Uterus (tissue), 4 donors: ENCODE measurements at regions of chr16 and their contacts with region 1.

Region 1: DNA sequence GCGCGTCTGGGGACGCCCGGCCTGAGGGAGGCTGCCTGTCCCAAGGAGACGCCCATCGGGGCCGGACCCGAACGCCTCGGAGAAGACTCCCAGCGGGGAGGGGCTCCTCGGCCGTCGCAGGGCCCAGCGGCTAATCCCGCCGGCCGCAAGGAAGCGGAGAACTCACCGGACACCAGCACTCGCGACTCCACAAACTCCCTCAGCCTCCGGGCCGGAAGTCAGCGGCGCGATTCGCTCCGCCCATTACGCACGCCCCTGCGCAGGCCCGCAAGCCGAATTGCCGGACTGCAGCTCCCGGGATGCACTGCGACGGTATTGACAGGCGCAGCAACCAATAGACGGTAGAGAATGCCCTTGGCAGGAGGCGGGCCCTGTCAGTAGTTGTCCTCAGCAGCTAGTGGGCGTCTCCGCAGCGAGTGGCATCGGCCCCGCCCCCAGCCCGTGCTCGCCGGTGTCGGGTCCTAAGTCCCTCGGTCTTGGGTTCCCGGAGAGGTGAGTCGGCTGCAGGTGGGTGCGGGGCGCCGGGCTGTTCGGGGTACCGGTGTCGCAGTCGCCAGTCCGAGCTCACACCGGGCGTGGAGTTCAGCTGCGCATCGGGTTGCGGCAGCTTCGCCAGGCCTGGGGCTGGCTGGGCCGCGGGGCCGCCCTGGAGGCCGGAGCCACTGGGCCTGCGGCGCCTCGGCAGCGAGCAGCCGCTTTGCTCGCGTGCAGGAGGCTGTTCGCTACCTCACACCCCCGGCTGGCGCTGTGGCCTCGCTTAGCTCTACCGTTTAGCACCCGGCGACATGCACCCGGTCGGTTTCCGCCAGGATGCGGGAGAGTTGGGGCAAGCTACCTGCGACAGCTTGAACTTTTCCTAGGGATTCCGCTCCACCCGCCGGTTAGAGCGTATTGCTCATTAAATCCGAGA is at the starts of genes ZNF174 and ZSCAN32:
- DNase-seq: peak; percentile 99 to 100
- H3K4me3 ChIP-seq: peak within 1 kb of the TSS; percentile 83 to 98
- H3K27ac ChIP-seq: peak within 1 kb of the TSS; percentile 62 to 88
- H3K4me1 ChIP-seq: no peaks in the 10 kb centered on the region
- H3K27me3 ChIP-seq: no peaks in the 10 kb centered on the region
- CTCF ChIP-seq: peak in 2 of 4 experiments; percentile 19 to 26
- POLR2A ChIP-seq: peak in 1 of 2 donors; percentile 53
- total RNA-seq, gene ZNF174: 5.6 to 16.2 (median 12.3) TPM
- total RNA-seq, gene ZSCAN32: 1.8 to 27.6 (median 16.1) TPM

Region 2: GRCh38 chr16:2983706-2984136 is 417.3 kb before region 1 on chr16:
- intact Hi-C with region 1: no loop called
- DNase-seq: peak; percentile 63 to 85
- H3K4me3 ChIP-seq: no peak overlapping the region
- H3K27ac ChIP-seq: no peak overlapping the region
- H3K4me1 ChIP-seq: peaks cover 0 to 13% of the 10 kb centered on the region in 2 donors
- H3K27me3 ChIP-seq: no peaks in the 10 kb centered on the region
- CTCF ChIP-seq: peak; percentile 64 to 96 (median 94)
- POLR2A ChIP-seq: no peak

Region 3: GRCh38 chr16:3311496-3311895 is 89.5 kb before region 1 on chr16:
- intact Hi-C with region 1: loop called (anchors 5 kb)
- DNase-seq: no peak
- H3K4me3 ChIP-seq: no peak overlapping the region
- H3K27ac ChIP-seq: no peak overlapping the region
- H3K4me1 ChIP-seq: no peaks in the 10 kb centered on the region
- H3K27me3 ChIP-seq: no peaks in the 10 kb centered on the region
- CTCF ChIP-seq: no peak
- POLR2A ChIP-seq: no peak

Region 4: GRCh38 chr16:3480901-3481695 is 80.1 kb after region 1 on chr16:
- intact Hi-C with region 1: no loop called
- DNase-seq: no peak
- H3K4me3 ChIP-seq: no peak overlapping the region
- H3K27ac ChIP-seq: no peak overlapping the region
- H3K4me1 ChIP-seq: no peaks in the 10 kb centered on the region
- H3K27me3 ChIP-seq: no peaks in the 10 kb centered on the region
- CTCF ChIP-seq: no peak
- POLR2A ChIP-seq: no peak